ENCODE measurements at regions of chr1 and their contacts with region 1.

Region 1: DNA sequence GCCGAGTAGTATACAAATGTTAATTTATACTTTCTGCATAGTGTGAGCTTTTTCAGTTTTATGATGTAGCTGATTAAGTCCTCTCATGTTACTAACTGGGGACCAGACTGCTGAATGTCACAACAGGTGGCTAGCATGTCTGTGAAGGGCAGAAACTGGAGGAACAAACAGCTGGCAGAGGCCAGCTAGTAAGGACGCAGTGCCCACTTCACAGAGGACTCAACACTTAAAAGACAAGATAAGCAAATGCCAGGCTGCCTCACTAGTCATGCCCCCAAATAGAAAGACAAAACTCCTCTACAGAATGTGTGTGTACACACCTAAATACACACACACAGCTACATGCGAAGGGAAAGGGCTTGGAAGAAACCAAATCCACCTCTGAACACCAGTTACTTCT is 73.8 kb upstream of the ZNF678 start:
- DNase-seq: no peak
- H3K4me3 ChIP-seq: no peak overlapping the region
- H3K27ac ChIP-seq: no peak overlapping the region
- H3K4me1 ChIP-seq: no peaks in the 10 kb centered on the region
- H3K27me3 ChIP-seq: no peaks in the 10 kb centered on the region
- CTCF ChIP-seq: no peak
- POLR2A ChIP-seq: no peak

Region 2: DNA sequence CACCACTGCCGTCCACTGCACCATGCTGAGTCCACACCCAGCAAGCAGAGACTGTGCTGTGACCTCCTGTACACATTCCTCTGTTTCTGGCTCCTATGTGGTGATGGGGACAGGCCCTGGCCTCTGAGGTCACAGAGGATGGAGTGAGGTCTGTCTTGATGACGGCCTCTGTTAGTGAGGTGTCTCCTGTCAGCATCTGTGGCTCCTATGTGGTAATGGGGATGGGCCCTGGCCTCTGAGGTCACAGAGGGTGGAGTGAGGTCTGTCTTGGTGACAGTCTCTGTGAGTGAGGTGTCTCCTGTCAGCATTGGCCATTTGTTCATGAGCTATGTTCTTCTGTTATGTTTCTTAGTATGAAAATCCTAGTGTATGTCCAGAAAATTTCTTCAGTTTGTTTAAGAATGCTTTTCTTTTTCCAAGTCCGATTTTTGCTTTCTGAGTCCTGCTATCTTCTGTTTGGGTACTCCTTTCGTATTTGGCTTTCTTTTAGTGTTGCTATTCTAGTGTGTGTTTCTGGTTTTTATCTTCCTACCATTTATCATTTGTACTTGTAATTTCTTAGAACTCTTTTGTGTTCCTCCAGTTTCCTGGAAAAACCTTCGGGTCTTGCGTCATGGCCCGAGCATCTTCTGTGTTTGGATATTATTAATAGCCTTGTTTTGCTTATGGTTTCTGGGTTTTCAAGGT is 259.1 kb after region 1 on chr1:
- intact Hi-C with region 1: loop called (anchors 10 kb)
- DNase-seq: no peak
- H3K4me3 ChIP-seq: no peak overlapping the region
- H3K27ac ChIP-seq: peak overlapping the region in 2 of 4 donors; percentile 29 to 33
- H3K4me1 ChIP-seq: peaks cover 4 to 52% (median 15%) of the 10 kb centered on the region in 3 donors
- H3K27me3 ChIP-seq: no peaks in the 10 kb centered on the region
- CTCF ChIP-seq: no peak
- POLR2A ChIP-seq: no peak

Measured in esophagus squamous epithelium (tissue), 5 donors.